ENCODE measurements at regions of chr5 and their contacts with region 1.

Region 1: DNA sequence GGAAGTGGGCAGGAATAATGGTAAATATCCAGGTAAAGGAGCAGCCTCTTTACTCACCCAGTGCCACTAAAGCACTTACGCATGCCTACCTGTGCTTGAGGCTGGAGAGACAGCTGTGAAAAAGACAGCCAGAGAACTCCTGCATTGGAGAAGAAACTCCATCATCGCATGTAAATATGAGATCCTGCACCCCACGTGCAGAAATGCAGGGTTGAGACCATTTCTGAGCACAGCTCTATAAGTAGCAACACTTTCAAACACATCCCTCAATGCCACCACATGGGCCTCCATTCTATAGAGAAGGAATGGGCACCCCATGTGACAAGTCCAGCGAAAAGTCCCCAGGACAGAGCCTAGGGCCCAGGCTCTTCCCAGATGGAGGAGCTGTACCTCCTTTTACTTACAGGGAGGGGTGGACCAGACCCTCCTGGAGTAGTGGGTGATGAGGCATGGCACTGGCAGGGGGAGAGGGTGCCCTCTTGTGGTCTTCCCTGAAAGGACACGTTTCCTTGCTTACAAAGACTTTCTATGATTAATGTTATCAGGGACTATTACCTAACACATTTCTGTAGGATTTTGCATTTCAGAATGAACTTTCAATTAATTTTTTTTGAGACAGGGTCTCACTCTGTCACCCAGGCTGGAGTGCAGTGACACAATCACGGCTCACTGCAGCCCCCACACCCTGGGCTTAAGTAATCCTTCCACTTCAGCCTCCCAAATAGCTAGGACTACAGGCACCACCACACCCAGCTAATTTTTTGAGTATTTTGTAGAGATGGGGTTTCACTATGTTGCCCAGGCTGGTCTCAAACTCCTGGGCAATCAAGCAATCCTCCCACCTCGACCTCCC is 55.3 kb upstream of the IL17B start:
- DNase-seq: peak; percentile 67
- H3K4me3 Mint-ChIP-seq: no peak overlapping the region
- H3K27ac Mint-ChIP-seq: no peak overlapping the region
- H3K4me1 Mint-ChIP-seq: peaks cover 25% of the 10 kb centered on the region
- H3K27me3 Mint-ChIP-seq: peaks cover 31% of the 10 kb centered on the region

Region 2: GRCh38 chr5:149251546-149251945 is 182.8 kb before region 1 on chr5:
- CTCF ChIA-PET with region 1: no interaction called
- DNase-seq: no peak
- H3K4me3 Mint-ChIP-seq: no peak overlapping the region
- H3K27ac Mint-ChIP-seq: no peak overlapping the region
- H3K4me1 Mint-ChIP-seq: peaks cover 2% of the 10 kb centered on the region
- H3K27me3 Mint-ChIP-seq: peaks cover 46% of the 10 kb centered on the region

Region 3: GRCh38 chr5:149317281-149318048 is 116.9 kb before region 1 on chr5:
- CTCF ChIA-PET with region 1: interaction called, 59 read pairs
- DNase-seq: peak; percentile 58
- H3K4me3 Mint-ChIP-seq: no peak overlapping the region
- H3K27ac Mint-ChIP-seq: no peak overlapping the region
- H3K4me1 Mint-ChIP-seq: no peaks in the 10 kb centered on the region
- H3K27me3 Mint-ChIP-seq: peaks cover 13% of the 10 kb centered on the region

Region 4: DNA sequence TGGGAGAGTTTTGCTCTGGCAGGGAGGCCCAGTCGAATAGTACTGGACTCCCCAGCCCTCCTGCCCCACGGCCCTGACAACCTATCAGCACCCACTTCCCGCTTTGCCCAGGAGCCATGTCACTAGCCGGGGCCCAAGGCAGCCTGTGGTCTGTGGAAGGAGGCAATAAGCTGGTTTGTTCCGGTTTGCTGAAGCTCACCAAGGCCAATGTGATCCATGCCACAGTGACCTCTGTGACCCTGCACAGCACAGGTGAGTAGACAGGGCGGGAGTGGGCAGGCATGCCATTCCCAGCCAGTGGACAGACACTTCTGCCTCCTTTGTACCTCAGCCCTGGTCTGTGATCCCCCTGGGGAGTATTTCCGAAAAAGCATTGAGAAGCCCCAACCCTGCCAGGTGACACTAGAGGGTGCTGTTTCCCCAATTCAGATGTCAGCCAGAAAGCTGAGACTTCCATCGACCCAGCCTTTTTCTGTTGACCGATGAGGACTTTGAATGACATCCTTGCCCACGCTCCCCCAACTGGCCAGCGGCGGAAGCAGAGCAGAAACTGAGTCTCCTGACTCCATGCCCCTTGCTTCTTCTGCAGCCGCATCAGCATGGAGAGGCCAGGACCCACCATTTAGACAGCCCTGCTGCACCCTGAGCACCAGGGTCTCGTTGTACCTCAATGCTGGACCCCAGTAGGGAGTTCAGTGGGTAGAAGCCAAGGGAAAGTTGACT is 67.0 kb before region 1 on chr5:
- CTCF ChIA-PET with region 1: interaction called, 29 read pairs
- DNase-seq: peak; percentile 69
- H3K4me3 Mint-ChIP-seq: no peak overlapping the region
- H3K27ac Mint-ChIP-seq: peak overlapping the region; percentile 60
- H3K4me1 Mint-ChIP-seq: peaks cover 6% of the 10 kb centered on the region
- H3K27me3 Mint-ChIP-seq: no peaks in the 10 kb centered on the region

Region 5: GRCh38 chr5:149381987-149382340 is 52.4 kb before region 1 on chr5:
- CTCF ChIA-PET with region 1: interaction called, 95 read pairs
- DNase-seq: peak; percentile 83
- H3K4me3 Mint-ChIP-seq: no peak overlapping the region
- H3K27ac Mint-ChIP-seq: no peak overlapping the region
- H3K4me1 Mint-ChIP-seq: no peaks in the 10 kb centered on the region
- H3K27me3 Mint-ChIP-seq: peaks cover 11% of the 10 kb centered on the region

Region 6: DNA sequence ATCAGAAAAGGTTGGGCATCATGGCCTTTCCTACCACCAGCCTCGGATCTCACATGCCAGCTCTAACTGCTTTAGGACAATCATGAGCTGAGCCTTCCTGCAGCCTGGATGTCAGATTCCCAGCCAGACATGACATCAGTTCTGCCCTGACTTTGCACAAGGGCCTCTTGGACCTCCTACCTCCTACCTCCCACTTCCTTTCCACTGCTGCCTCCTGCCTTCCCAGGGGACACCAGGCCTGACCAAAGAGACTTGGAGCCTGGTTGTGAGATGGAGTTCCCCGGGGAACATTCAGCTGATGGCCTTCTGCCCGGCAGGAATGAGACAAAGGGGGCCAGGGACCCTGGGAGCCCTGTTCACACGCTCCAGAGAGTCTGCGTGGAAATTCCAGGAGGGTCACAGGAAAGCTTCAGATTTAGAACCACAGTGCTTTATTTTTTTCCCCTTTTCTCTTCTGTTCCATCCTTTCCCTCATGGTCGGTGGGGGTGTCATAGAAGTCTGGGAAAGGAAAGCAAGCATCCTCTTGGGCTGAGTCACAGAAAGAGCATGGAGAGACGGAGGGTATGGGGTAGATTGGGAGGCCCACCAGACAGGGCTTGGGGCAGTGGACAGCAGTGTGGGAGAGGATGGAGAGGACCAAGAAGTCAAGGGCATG is 19.9 kb before region 1 on chr5:
- CTCF ChIA-PET with region 1: interaction called, 13 read pairs
- DNase-seq: no peak
- H3K4me3 Mint-ChIP-seq: no peak overlapping the region
- H3K27ac Mint-ChIP-seq: no peak overlapping the region
- H3K4me1 Mint-ChIP-seq: no peaks in the 10 kb centered on the region
- H3K27me3 Mint-ChIP-seq: peaks cover 33% of the 10 kb centered on the region

Region 7: GRCh38 chr5:149448831-149449714 is 14.7 kb after region 1 on chr5:
- CTCF ChIA-PET with region 1: interaction called, 56 read pairs
- DNase-seq: no peak
- H3K4me3 Mint-ChIP-seq: no peak overlapping the region
- H3K27ac Mint-ChIP-seq: no peak overlapping the region
- H3K4me1 Mint-ChIP-seq: no peaks in the 10 kb centered on the region
- H3K27me3 Mint-ChIP-seq: peaks cover 11% of the 10 kb centered on the region

Region 8: DNA sequence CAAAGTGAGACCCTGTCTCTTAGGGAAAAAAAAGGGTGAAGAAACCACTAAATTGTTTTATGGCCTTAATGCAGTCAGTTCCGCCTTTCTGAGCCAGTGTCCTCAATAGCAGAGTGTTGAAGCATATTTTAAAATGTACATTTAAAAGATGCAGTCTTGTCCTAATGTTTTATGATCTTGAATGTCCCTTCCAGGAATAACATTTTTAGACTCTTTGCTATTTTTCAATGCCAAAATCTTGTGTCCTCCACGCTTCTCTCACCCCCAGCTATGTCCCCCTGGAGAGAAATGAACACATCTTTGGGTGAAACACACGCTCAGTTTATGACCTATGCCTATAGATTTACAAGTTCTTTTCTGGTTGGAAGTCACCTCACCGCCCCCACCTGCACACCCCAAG is 47.1 kb after region 1 on chr5:
- CTCF ChIA-PET with region 1: no interaction called
- DNase-seq: no peak
- H3K4me3 Mint-ChIP-seq: no peak overlapping the region
- H3K27ac Mint-ChIP-seq: no peak overlapping the region
- H3K4me1 Mint-ChIP-seq: no peaks in the 10 kb centered on the region
- H3K27me3 Mint-ChIP-seq: peaks cover 38% of the 10 kb centered on the region

Region 9: DNA sequence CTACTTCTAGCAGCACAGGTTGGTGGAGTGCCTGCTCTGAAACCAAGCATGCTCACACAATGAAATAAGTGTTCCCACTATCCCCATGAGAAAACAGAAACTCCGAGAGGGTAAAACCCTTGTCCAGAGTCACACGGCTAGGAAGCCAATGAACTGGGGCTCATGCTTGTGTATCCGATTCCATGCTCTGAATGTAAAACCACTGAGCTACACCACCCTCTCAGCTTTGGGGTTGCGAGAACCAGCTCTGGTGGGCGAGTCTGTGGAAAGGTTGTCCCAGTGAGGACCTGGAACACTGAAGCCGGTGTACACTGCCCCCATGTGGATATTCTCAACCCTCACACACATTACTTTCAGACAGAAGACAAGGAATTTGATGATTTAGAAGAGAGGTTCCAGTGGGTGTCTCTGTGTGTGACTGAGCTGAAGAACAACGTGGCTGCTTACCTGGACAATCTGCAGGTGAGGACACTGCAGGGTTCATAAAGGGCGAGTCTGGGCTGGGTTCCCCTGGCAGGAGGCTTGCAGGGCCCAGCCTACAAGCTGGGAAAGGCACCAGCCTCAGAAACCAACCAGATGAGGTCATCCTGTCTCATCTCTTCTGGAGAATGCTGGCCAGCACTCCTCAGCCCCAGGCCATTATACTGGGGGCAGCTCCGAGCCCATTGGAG is 184.3 kb after region 1 on chr5:
- CTCF ChIA-PET with region 1: interaction called, 41 read pairs
- DNase-seq: peak; percentile 48
- H3K4me3 Mint-ChIP-seq: no peak overlapping the region
- H3K27ac Mint-ChIP-seq: no peak overlapping the region
- H3K4me1 Mint-ChIP-seq: no peaks in the 10 kb centered on the region
- H3K27me3 Mint-ChIP-seq: peaks cover 4% of the 10 kb centered on the region